ENCODE measurements at regions of chr11 and their contacts with region 1.

Region 1: GRCh38 chr11:12893787-12894672 is 115.1 kb upstream of the RASSF10 start:
- DNase-seq: peak; percentile 68 to 87
- ATAC-seq: peak; percentile 47
- H3K4me3 ChIP-seq: no peak overlapping the region
- H3K27ac ChIP-seq: no peak overlapping the region
- H3K4me1 ChIP-seq: no peaks in the 10 kb centered on the region
- H3K27me3 ChIP-seq: no peaks in the 10 kb centered on the region

Region 2: DNA sequence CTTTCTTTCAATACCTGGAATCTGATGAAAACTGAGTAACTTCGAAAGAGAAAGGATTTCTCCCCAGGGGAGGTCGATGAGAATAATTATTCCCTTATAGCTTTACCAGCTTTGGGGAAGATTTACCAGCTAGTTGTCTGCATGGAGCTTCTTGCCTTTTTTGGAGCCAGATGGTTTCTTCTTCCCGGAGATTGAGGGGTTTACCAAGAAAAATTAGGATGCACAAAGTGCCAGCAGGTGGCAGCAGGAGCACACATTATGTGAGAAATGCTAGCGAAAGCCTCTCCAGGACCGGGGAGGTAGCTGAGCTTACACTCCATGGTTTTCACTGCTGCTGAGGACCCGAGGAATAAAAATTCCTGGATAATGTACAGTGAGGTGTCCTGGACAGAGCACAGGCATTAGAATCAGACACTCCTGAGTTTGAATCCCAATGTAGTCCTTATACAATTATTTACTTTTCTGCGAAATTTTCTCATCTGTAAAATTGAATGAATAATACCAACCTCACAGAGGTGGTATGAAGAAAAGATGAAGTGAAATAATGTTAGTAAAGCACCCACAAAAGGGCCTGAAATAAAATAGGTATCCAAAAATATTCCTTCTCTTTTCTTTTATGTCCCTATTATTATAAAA is 562.7 kb before region 1 on chr11:
- intact Hi-C with region 1: loop called (anchors 2 kb)
- DNase-seq: peak; percentile 87 to 92
- ATAC-seq: peak; percentile 89
- H3K4me3 ChIP-seq: no peak overlapping the region
- H3K27ac ChIP-seq: no peak overlapping the region
- H3K4me1 ChIP-seq: no peaks in the 10 kb centered on the region
- H3K27me3 ChIP-seq: no peaks in the 10 kb centered on the region

Region 3: GRCh38 chr11:12411806-12412727 is 482.0 kb before region 1 on chr11:
- intact Hi-C with region 1: loop called in 1 of 2 experiments (anchors 10 kb)
- DNase-seq: peak; percentile 75 to 84
- ATAC-seq: peak; percentile 87
- H3K4me3 ChIP-seq: no peak overlapping the region
- H3K27ac ChIP-seq: peak overlapping the region; percentile 84 to 85
- H3K4me1 ChIP-seq: peaks cover 9 to 17% of the 10 kb centered on the region in 2 donors
- H3K27me3 ChIP-seq: no peaks in the 10 kb centered on the region

Region 4: DNA sequence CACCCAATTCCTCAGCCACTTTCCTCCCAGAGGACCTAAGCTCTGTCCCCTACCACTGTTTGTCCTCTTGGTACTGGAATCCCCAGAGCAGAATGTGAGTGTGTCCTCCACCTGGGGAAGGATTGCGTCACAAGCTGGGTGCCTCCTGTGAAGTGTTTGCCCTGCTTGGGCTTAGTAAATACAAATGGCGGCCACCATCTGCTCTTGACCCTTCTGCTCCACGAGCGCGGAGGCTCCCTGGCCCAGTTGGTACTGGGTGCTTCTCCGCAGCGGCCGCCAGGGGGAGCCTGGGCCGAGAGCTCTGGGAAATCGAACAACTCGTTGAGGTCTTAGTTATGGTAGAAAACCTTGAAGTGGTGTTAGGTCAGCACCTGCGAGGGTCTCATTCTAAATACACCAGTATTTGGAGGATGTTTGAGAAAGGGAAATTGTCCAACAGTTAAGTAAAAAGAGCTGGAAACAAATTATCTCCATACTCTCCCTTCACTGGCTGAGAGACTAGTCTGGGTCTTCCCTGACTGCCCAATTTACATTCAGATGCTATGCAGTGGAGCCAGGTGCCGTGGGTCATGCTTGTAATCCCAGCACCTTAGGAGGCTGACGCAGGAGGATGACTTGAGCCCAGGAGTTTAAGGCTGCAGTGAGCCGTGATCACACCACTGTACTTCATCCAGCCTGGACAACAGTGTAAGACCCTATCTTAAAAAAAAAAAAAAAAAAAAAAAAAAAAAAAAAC is 294.5 kb before region 1 on chr11:
- intact Hi-C with region 1: loop called (anchors 2 to 5 kb)
- DNase-seq: peak; percentile 66 to 81
- ATAC-seq: peak; percentile 79
- H3K4me3 ChIP-seq: no peak overlapping the region
- H3K27ac ChIP-seq: no peak overlapping the region
- H3K4me1 ChIP-seq: no peaks in the 10 kb centered on the region
- H3K27me3 ChIP-seq: no peaks in the 10 kb centered on the region

Region 5: DNA sequence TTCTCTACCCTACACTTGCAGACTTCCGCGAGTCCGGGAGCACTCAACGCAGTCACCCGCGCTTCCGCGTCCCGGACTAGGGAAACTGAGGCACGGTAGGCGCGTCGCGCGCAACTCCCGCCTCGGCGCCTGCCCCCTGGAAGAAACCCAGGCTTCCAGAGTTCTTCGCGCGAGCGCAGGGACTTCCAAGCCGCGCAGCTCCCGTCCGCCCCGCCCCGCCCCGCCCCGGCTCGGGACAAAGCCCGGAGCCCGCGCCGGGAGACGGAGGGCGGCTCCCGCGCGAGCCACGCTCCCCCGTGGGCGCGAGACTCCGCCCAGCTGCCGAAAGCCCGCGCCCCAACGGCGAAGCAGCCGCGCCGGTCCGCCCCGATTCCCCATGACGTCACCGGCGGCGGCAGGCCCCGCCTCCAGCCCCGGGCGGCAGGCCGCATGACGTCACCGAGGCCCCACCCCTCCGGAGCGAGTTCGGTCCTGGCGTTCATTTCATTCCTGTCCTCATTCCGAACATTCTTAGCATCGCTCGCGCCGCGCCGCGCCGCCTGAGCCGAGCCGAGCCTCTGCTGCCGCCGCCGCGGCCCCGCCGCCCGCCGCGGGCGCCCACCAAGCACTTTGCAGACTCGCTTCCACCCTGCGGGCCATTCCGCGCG is 220.0 kb before region 1 on chr11 and contains the start of gene TEAD1:
- intact Hi-C with region 1: loop called (anchors 2 to 10 kb)
- DNase-seq: peak; percentile 96 to 99
- ATAC-seq: peak; percentile 96
- H3K4me3 ChIP-seq: peak within 1 kb of the TSS; percentile 92 to 99
- H3K27ac ChIP-seq: peak within 1 kb of the TSS; percentile 71 to 88
- H3K4me1 ChIP-seq: peaks cover 0 to 2% of the 10 kb centered on the region in 2 donors
- H3K27me3 ChIP-seq: no peaks in the 10 kb centered on the region
- total RNA-seq, gene TEAD1: 56.5 to 64.9 TPM

Region 6: GRCh38 chr11:13016415-13016814 is 122.4 kb after region 1 on chr11:
- intact Hi-C with region 1: no loop called
- DNase-seq: no peak
- ATAC-seq: no peak
- H3K4me3 ChIP-seq: no peak overlapping the region
- H3K27ac ChIP-seq: no peak overlapping the region
- H3K4me1 ChIP-seq: no peaks in the 10 kb centered on the region
- H3K27me3 ChIP-seq: no peaks in the 10 kb centered on the region